HepG2 (cell line): ENCODE measurements at regions of chr18 and their contacts with region 1.

Region 1: GRCh38 chr18:23828426-23828825 is 139.2 kb downstream of the LAMA3 start:
- DNase-seq: peak; percentile 23
- ATAC-seq: no peak
- H3K4me3 ChIP-seq: no peak overlapping the region
- H3K27ac ChIP-seq: no peak overlapping the region
- H3K4me1 ChIP-seq: peaks cover 16% of the 10 kb centered on the region
- H3K27me3 ChIP-seq: 0 out of 5 replicates have a peak, but pooled peaks cover 0 to 2% of the 10 kb centered on the region in 2 experiments
- CTCF ChIP-seq: no peak
- EP300 ChIP-seq: no peak
- POLR2A ChIP-seq: no peak
- RAD21 ChIP-seq: no peak

Region 2: GRCh38 chr18:23918401-23919032 is 90.1 kb after region 1 on chr18:
- CTCF ChIA-PET with region 1: no interaction called
- POLR2A ChIA-PET with region 1: no interaction called
- in situ Hi-C with region 1: loop called (anchors 5 kb)
- intact Hi-C with region 1: loop called (anchors 2 kb)
- DNase-seq: peak; percentile 55
- ATAC-seq: peak; percentile 84
- H3K4me3 ChIP-seq: no peak overlapping the region
- H3K27ac ChIP-seq: no peak overlapping the region
- H3K4me1 ChIP-seq: no peaks in the 10 kb centered on the region
- H3K27me3 ChIP-seq: no peaks in the 10 kb centered on the region; a peak in 1 of 5 replicates
- CTCF ChIP-seq: peak; percentile 83
- EP300 ChIP-seq: no peak
- POLR2A ChIP-seq: no peak
- RAD21 ChIP-seq: peak; percentile 57; the same call in 1 of the 2 replicates

Region 3: DNA sequence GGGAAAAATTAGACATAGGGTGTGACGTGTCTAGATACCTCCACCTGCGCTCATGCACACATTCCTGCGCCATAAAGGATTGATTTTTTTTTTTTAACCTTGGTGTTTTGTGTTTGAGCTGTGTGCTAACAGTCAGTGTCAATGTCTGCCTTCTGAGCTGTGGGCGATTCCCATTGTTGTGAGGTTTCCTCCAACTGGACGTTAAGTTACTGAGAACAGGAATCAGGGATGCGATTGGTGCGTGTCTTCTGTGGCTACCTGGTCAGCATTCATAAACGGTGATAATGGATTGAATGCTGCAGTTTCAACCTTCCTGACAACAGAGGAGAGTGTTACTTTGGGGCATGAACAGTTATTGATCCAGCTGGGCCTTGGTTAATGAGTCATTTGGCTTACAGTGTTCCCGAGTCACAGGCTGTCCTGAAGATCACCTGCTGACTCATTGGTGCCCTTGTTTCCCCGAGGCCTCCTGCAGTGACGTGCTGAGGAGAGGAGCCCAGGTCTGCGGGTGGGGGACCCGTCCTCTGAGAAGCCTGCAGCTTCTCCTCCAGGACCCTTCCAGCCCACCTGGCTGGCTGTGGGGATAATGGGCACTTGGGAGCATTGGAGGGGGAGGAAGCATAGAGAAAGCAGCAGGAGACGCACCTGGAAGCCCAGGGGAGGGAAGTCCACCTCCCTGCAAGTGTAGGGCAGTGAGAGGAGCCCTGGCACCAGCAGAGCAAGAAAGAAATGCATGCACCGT is 284.6 kb after region 1 on chr18:
- CTCF ChIA-PET with region 1: no interaction called
- POLR2A ChIA-PET with region 1: no interaction called
- in situ Hi-C with region 1: loop called (anchors 10 kb)
- intact Hi-C with region 1: loop called (anchors 2 kb)
- DNase-seq: peak; percentile 87
- ATAC-seq: peak; percentile 94
- H3K4me3 ChIP-seq: peak overlapping the region; percentile 17 to 66 (median 41); a peak in 3 of 6 replicates
- H3K27ac ChIP-seq: peak overlapping the region; percentile 86
- H3K4me1 ChIP-seq: peaks cover 56% of the 10 kb centered on the region
- H3K27me3 ChIP-seq: no peaks in the 10 kb centered on the region
- CTCF ChIP-seq: 0 out of 2 replicates have a peak, but pooled peaks have one; percentile 20
- EP300 ChIP-seq: peak; percentile 26 to 70; a peak in 3 of 4 replicates
- POLR2A ChIP-seq: peak; percentile 38 to 63; a peak in 2 of 4 replicates
- RAD21 ChIP-seq: no peak